Colonic mucosa (tissue), 4 donors: ENCODE measurements at regions of chr2 and their contacts with region 1.

Region 1: GRCh38 chr2:96213379-96213778 is 4.8 kb upstream of the STARD7 start:
- DNase-seq: no peak
- H3K4me3 ChIP-seq: no peak overlapping the region
- H3K27ac ChIP-seq: no peak overlapping the region
- H3K4me1 ChIP-seq: no peaks in the 10 kb centered on the region
- H3K27me3 ChIP-seq: no peaks in the 10 kb centered on the region
- CTCF ChIP-seq: no peak

Region 2: GRCh38 chr2:96251721-96252292 is 38.4 kb after region 1 on chr2:
- intact Hi-C with region 1: loop called (anchors 5 kb)
- DNase-seq: no peak
- H3K4me3 ChIP-seq: no peak overlapping the region
- H3K27ac ChIP-seq: no peak overlapping the region
- H3K4me1 ChIP-seq: no peaks in the 10 kb centered on the region
- H3K27me3 ChIP-seq: no peaks in the 10 kb centered on the region
- CTCF ChIP-seq: no peak

Region 3: DNA sequence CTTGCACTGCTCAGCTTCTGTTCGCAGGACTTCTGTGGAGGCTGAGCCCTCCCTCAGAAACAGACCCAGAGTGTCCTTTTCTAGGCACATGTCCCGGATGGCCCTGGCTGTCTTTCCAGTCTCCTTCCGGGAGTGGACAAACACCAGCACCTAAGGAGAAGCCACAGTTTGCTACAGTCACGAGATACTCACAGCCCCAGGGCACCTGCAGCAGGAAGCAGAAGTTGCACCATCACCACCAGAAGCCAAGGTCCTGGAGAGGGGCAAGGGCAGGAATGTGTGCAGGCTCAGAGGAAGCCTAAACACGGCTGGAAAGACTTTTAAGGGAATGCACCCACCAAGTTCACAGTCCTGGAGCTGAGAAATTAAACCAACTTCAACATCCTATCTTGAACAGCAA is 78.4 kb after region 1 on chr2:
- intact Hi-C with region 1: no loop called
- DNase-seq: no peak
- H3K4me3 ChIP-seq: no peak overlapping the region
- H3K27ac ChIP-seq: no peak overlapping the region
- H3K4me1 ChIP-seq: no peaks in the 10 kb centered on the region
- H3K27me3 ChIP-seq: no peaks in the 10 kb centered on the region
- CTCF ChIP-seq: no peak